Left lung (tissue), 14 donors: ENCODE measurements at regions of chr16 and their contacts with region 1.

Region 1: GRCh38 chr16:19886073-19886941 is 1.7 kb upstream of the GPRC5B start:
- DNase-seq: peak; percentile 68 to 81 (median 72)
- ATAC-seq: peak; percentile 83
- H3K4me3 ChIP-seq: peak overlapping the region in 1 of 2 donors; percentile 48
- H3K27ac ChIP-seq: no peak overlapping the region
- H3K4me1 ChIP-seq: peaks cover 6 to 24% of the 10 kb centered on the region in 2 donors
- H3K27me3 ChIP-seq: peaks cover 14 to 49% of the 10 kb centered on the region in 2 donors
- CTCF ChIP-seq: peak; percentile 91 to 100

Region 2: GRCh38 chr16:19563377-19563776 is 322.9 kb before region 1 on chr16:
- intact Hi-C with region 1: loop called in 1 of 2 experiments (anchors 10 kb)
- DNase-seq: no peak
- ATAC-seq: no peak
- H3K4me3 ChIP-seq: no peak overlapping the region
- H3K27ac ChIP-seq: no peak overlapping the region
- H3K4me1 ChIP-seq: no peaks in the 10 kb centered on the region
- H3K27me3 ChIP-seq: no peaks in the 10 kb centered on the region
- CTCF ChIP-seq: no peak

Region 3: DNA sequence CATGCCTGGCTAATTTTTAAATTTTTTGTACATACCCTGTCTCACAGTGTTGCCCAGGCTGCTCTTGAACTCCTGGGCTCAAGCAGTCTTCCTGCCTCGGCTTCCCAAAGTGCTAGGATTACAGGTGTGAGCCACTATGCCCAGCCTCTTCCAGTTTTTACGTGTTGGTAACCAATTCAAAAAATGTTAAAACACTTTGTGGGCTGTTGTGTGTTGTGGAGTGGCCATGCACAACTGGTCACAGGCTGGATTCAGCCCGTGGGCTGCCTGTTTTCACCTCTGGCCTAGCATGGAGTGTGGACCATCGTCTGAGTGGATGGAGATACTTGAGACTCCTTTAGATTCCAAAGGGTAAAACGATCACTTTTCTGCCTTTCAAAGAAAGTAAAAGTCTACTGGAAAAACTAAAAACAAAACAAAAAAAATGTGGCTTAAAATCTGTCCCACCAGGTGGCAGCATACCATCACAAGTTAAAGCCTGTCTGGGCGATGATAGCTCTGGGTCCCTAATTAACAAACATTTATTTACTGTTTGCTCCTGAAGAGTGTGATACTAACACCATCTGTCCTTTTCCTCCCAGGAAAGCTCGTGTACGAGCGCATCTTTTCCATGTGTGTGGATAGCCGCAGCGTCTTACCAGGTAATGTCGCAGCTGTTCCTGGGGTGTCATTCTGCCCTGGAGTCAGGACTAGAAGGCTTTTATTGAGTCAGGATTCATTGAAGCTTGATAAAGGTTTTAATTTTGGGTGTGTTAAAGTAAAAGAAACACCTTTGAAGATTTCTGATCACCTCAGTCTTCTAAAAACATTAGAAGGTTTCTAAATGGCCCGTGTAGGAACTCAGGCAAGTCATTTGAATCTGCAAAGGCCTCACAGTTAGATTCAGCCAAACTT is 285.0 kb before region 1 on chr16:
- intact Hi-C with region 1: loop called in 1 of 2 experiments (anchors 5 kb)
- DNase-seq: peak in 2 of 4 donors; percentile 24 to 50
- ATAC-seq: peak; percentile 26
- H3K4me3 ChIP-seq: no peak overlapping the region
- H3K27ac ChIP-seq: no peak overlapping the region
- H3K4me1 ChIP-seq: no peaks in the 10 kb centered on the region
- H3K27me3 ChIP-seq: no peaks in the 10 kb centered on the region
- CTCF ChIP-seq: peak in 1 of 2 donors; percentile 39

Region 4: DNA sequence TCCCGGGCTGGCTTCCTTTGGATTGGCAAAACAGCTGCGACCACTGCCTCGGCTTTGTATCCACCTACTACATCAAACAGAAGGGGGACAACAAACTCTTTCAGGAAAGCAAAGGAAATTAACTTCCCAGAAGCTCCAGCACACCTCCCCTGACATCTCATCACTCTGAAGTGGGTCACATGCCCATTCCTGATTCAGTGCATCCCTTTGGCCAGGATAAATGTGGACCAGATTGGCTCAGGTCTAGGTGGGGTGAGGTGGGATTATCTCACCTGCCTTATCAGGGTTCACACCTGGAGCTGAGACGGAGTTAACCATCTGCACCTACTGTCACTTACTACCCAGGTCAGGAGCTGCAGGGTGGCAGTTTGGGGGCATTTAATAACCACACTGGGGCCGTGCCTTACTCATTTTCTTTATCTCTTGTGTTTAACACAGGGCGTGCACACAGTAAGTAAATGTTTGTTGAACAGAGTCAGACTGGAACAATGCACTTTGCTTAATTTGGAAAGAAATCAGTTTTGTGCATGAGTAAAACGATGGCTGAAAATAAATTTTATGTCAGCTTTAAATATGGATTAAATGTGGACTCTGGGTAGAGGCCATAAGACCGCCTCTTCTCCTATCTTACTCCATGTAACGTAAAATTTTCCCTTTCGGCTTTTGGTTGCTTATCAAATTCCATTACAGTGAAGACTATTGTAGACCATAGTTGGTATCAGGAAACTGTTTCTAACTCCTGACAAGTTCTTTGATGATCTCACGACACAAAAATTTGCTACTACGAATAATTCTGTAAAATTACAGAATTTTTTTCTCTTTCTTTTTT is 132.3 kb before region 1 on chr16:
- intact Hi-C with region 1: no loop called
- DNase-seq: no peak
- ATAC-seq: peak; percentile 61
- H3K4me3 ChIP-seq: no peak overlapping the region
- H3K27ac ChIP-seq: no peak overlapping the region
- H3K4me1 ChIP-seq: peaks cover 0 to 3% of the 10 kb centered on the region in 2 donors
- H3K27me3 ChIP-seq: no peaks in the 10 kb centered on the region
- CTCF ChIP-seq: no peak

Region 5: GRCh38 chr16:19968891-19969594 is 82.7 kb after region 1 on chr16:
- intact Hi-C with region 1: no loop called
- DNase-seq: no peak
- ATAC-seq: no peak
- H3K4me3 ChIP-seq: no peak overlapping the region
- H3K27ac ChIP-seq: no peak overlapping the region
- H3K4me1 ChIP-seq: no peaks in the 10 kb centered on the region
- H3K27me3 ChIP-seq: peaks cover 0 to under 1% of the 10 kb centered on the region in 2 donors
- CTCF ChIP-seq: no peak